ENCODE measurements at regions of chr15 and their contacts with region 1.

Region 1: GRCh38 chr15:61834076-61834697 is 226.1 kb downstream of the VPS13C start:
- DNase-seq: peak; percentile 79 to 84
- ATAC-seq: peak; percentile 69 to 86 (median 76)
- H3K4me3 ChIP-seq: no peak overlapping the region
- H3K27ac ChIP-seq: no peak overlapping the region
- H3K4me1 ChIP-seq: peaks cover 0 to 12% (median 3%) of the 10 kb centered on the region in 9 donors
- H3K27me3 ChIP-seq: peaks cover 0 to 13% (median 0%) of the 10 kb centered on the region in 7 donors
- CTCF ChIP-seq: peak; percentile 94 to 99 (median 98)

Region 2: DNA sequence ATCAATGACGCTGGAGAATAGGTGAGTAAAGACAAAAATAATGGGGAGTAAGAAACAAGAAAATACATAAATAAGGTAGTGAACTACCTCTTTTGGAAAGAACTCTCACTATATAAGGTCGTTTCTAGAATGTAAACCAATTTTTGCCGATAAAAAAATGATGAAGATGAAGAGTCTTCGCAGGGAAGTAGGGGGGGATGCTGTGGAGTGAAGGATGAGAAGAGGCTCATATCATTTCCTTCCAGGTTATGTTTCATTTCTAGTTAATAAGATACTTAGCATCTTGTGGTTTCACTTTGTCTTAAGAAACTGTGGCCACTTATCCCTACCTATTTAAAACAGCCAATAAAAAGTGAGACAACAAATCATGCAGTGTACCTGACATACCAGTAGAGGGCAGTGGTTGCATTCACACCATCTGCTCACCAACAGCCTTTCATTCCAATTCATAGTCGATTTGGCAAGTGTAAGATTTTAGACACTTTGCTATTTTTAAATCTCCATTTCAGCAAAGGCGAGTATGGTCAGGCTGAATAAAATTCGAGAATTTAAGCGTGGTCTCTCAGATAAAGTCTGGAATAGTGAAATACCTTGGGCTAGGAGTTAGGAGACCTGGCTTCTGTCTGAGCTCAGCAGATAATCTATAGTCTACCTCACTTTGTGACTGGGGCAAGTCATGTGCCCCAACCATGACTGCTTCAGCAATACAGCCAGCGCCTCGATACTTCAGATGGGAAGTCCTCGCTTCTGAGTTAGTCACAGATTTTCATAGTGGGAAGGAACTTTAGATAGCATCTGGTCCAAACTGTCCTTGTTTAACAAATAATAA is 1326.4 kb before region 1 on chr15:
- intact Hi-C with region 1: loop called in 7 of 10 experiments (anchors 2 to 10 kb)
- DNase-seq: peak in 1 of 2 donors; percentile 50
- ATAC-seq: peak in 7 of 8 donors; percentile 55 to 83 (median 72)
- H3K4me3 ChIP-seq: no peak overlapping the region
- H3K27ac ChIP-seq: peak overlapping the region in 2 of 10 donors; percentile 12 to 28
- H3K4me1 ChIP-seq: peaks cover 10 to 46% (median 25%) of the 10 kb centered on the region in 9 donors
- H3K27me3 ChIP-seq: no peaks in the 10 kb centered on the region
- CTCF ChIP-seq: peak; percentile 85 to 97 (median 90)

Region 3: GRCh38 chr15:60585743-60586708 is 1248.2 kb before region 1 on chr15:
- intact Hi-C with region 1: loop called in 6 of 10 experiments (anchors 5 to 10 kb)
- DNase-seq: peak in 1 of 2 donors; percentile 71
- ATAC-seq: peak; percentile 61 to 87 (median 76)
- H3K4me3 ChIP-seq: no peak overlapping the region
- H3K27ac ChIP-seq: peak overlapping the region in 2 of 10 donors; percentile 28 to 52
- H3K4me1 ChIP-seq: peaks cover 2 to 72% (median 38%) of the 10 kb centered on the region in 9 donors
- H3K27me3 ChIP-seq: peaks cover 0 to 28% (median 0%) of the 10 kb centered on the region in 7 donors
- CTCF ChIP-seq: peak; percentile 74 to 97 (median 91)

Region 4: GRCh38 chr15:61169904-61170695 is 664.1 kb before region 1 on chr15:
- intact Hi-C with region 1: loop called in 2 of 10 experiments (anchors 10 kb)
- DNase-seq: no peak
- ATAC-seq: no peak
- H3K4me3 ChIP-seq: no peak overlapping the region
- H3K27ac ChIP-seq: no peak overlapping the region
- H3K4me1 ChIP-seq: peaks cover 0 to 11% (median 9%) of the 10 kb centered on the region in 9 donors
- H3K27me3 ChIP-seq: no peaks in the 10 kb centered on the region
- CTCF ChIP-seq: no peak

Region 5: DNA sequence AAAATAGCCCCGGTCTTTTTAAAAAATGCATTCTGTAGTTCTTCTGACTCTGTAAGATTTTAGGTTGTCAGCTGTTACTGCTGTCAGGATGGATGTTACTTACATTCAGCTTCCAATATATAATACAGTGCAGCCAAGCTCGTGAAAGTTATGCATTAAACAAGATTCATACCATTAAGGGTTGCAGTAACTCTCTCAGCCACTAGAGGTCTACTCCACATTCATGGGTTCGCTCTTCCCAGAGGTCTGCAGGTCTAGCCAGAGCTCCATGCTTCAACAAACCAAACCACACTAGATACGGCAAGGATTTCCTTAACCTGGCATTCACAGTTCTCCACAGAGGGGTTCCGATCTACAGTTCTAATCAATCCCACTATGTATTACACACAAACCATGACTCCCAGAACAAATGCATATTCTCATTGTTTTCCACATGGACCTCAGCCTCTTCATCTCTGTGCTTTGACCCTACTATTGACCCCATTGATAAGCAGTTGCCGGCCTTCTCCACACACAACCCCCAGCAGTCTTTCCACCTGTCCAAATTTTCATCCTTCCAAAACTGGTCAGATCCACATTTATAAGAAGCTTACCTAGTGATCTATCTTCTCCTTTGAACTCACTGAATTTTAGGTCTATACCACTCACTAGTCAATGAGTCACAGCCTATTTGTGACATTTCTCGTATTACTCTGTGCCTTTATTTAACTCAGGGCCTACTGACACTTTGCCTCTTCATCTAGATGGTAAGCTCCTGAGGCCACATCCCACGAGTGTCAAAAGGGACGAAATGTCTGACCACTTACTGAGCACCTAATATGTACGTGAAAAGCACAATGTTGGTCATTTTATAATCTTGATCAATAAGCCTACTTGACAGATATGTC is 638.8 kb before region 1 on chr15:
- intact Hi-C with region 1: loop called in 2 of 10 experiments (anchors 1 to 10 kb)
- DNase-seq: no peak
- ATAC-seq: no peak
- H3K4me3 ChIP-seq: no peak overlapping the region
- H3K27ac ChIP-seq: no peak overlapping the region
- H3K4me1 ChIP-seq: peaks cover 0 to 2% (median 0%) of the 10 kb centered on the region in 9 donors
- H3K27me3 ChIP-seq: no peaks in the 10 kb centered on the region
- CTCF ChIP-seq: peak; percentile 36 to 64 (median 56)

Region 6: GRCh38 chr15:61205346-61205921 is 628.8 kb before region 1 on chr15:
- intact Hi-C with region 1: loop called in 1 of 10 experiments (anchors 10 kb)
- DNase-seq: no peak
- ATAC-seq: peak in 3 of 8 donors; percentile 44 to 51 (median 46)
- H3K4me3 ChIP-seq: peak overlapping the region in 8 of 10 donors; percentile 7 to 42 (median 27)
- H3K27ac ChIP-seq: peak overlapping the region in 4 of 10 donors; percentile 34 to 44 (median 40)
- H3K4me1 ChIP-seq: peaks cover 0 to 15% (median 0%) of the 10 kb centered on the region in 9 donors
- H3K27me3 ChIP-seq: no peaks in the 10 kb centered on the region
- CTCF ChIP-seq: no peak

Region 7: DNA sequence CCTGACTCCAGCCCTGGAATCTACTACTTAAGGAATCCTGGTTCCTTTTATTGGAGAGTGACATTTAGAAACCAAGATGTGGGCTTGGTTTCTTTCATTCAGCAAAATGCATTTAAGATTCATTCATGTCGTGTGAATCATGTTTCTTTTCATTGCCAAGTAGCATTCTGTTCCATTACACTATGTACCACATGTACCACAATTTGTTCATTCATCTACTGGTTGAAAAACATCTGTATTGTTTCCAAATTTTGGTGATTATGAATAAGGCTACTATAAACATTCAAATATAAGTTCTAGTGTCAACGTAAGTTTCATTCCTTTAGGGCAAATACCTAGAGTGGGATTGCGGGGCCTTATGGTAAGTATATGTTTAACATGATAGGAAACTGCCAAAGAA is 38.1 kb before region 1 on chr15:
- intact Hi-C with region 1: no loop called
- DNase-seq: no peak
- ATAC-seq: no peak
- H3K4me3 ChIP-seq: no peak overlapping the region
- H3K27ac ChIP-seq: no peak overlapping the region
- H3K4me1 ChIP-seq: no peaks in the 10 kb centered on the region
- H3K27me3 ChIP-seq: peaks cover 0 to 9% (median 0%) of the 10 kb centered on the region in 7 donors
- CTCF ChIP-seq: no peak

Measured in heart right ventricle (tissue), 16 donors.